Gastrocnemius medialis (tissue), 4 donors: ENCODE measurements at regions of chr7 and their contacts with region 1.

Region 1: DNA sequence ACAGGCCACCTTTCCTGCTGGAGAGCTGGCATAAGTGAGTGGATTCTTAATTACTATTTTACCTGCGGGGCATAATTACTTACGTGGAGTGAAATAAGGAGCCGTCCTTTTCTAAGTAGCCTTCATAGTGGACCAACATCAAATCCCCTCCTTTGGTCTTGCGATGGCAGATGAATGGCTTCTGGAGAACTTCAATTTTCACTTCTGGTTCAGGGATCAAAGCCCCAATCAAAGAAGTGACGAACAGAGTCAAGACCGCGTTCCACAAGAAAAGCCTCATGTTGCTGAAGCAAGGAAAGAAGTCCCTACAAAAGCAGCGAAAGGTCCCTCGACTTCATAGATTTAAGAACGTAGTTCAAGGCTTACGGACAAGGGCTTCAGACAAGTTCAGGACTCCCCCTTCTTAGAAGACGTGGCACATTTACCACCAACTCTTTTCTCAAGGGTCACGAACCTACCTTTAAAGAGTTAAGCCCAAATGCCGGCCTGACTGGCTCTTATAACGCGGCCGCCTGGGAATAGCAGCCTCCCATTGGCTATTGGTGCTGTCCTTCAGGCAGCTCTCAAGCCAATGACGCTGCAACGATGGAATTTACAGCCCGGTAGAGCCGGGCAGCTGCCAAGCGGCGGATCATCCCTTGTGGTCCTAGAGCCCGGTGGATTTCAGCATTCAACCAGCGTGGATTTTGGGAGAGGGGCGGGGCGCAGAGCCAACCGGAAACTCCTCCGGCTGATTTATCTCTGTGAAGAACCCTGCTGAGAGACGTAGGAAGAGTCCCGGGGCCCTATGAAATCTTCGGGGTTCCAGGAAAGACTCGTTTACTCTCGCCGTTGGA is at the start of gene FKBP14:
- DNase-seq: peak; percentile 98
- ATAC-seq: peak; percentile 90 to 94
- H3K4me3 ChIP-seq: peak within 1 kb of the TSS; percentile 73 to 94 (median 89)
- H3K27ac ChIP-seq: peak within 1 kb of the TSS; percentile 80 to 94 (median 93)
- H3K4me1 ChIP-seq: peaks cover 31 to 36% of the 10 kb centered on the region in 2 donors
- H3K27me3 ChIP-seq: no peaks in the 10 kb centered on the region
- CTCF ChIP-seq: no peak
- POLR2A ChIP-seq: peak in 1 of 2 donors; percentile 48
- total RNA-seq, gene FKBP14: 1.4 to 2.4 (median 1.5) TPM

Region 2: GRCh38 chr7:29806208-29806994 is 220.0 kb before region 1 on chr7 and contains the start of gene WIPF3:
- in situ Hi-C with region 1: no loop called
- intact Hi-C with region 1: loop called (anchors 2 kb)
- DNase-seq: peak in 1 of 2 donors; percentile 56
- ATAC-seq: peak; percentile 55 to 59
- H3K4me3 ChIP-seq: peak within 1 kb of the TSS; percentile 59 to 82 (median 72)
- H3K27ac ChIP-seq: peak within 1 kb of the TSS; percentile 84 to 96 (median 94)
- H3K4me1 ChIP-seq: peaks cover 33 to 35% of the 10 kb centered on the region in 2 donors
- H3K27me3 ChIP-seq: no peaks in the 10 kb centered on the region
- CTCF ChIP-seq: peak in 2 of 5 experiments; percentile 19 to 29
- POLR2A ChIP-seq: peak; percentile 73 to 80
- total RNA-seq, gene WIPF3: 4.2 to 9.9 (median 8.3) TPM

Region 3: DNA sequence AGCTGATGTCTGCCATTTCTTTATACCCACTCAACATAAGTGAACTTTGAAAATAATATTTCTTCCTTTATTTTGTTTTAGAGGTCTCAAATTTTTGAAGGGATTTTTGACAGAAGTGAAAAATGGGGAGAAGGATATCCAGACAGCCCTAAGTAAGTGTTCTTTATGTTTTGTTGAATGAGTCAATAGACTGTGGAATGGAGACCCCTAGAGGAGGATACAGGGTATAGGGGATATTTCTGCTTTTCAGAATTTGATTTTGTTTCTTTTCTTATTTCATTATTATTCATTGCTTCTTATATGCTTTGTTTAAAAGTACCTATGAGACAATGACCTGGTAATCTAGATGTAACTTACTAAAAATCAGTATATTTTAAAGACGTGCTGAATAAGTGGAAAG is 36.1 kb after region 1 on chr7:
- in situ Hi-C with region 1: no loop called
- intact Hi-C with region 1: loop called (anchors 5 kb)
- DNase-seq: no peak
- ATAC-seq: peak in 1 of 2 donors; percentile 66
- H3K4me3 ChIP-seq: no peak overlapping the region
- H3K27ac ChIP-seq: no peak overlapping the region
- H3K4me1 ChIP-seq: no peaks in the 10 kb centered on the region
- H3K27me3 ChIP-seq: no peaks in the 10 kb centered on the region
- CTCF ChIP-seq: peak in 2 of 5 experiments; percentile 28 to 49
- POLR2A ChIP-seq: no peak

Region 4: GRCh38 chr7:30284298-30285066 is 258.0 kb after region 1 on chr7 and contains the start of gene ZNRF2:
- in situ Hi-C with region 1: no loop called
- intact Hi-C with region 1: loop called (anchors 2 kb)
- DNase-seq: peak; percentile 100
- ATAC-seq: peak; percentile 76 to 79
- H3K4me3 ChIP-seq: peak within 1 kb of the TSS; percentile 77 to 98 (median 81)
- H3K27ac ChIP-seq: peak within 1 kb of the TSS; percentile 91 to 99 (median 96)
- H3K4me1 ChIP-seq: peaks cover 32 to 39% of the 10 kb centered on the region in 2 donors
- H3K27me3 ChIP-seq: no peaks in the 10 kb centered on the region
- CTCF ChIP-seq: peak; percentile 39 to 53 (median 50)
- POLR2A ChIP-seq: peak; percentile 89 to 93
- total RNA-seq, gene ZNRF2: 9.6 to 19.3 (median 17.4) TPM

Region 5: GRCh38 chr7:30594549-30595435 is 568.3 kb after region 1 on chr7 and contains the start of gene GARS1:
- in situ Hi-C with region 1: no loop called
- intact Hi-C with region 1: loop called (anchors 5 kb)
- DNase-seq: peak; percentile 76 to 84
- ATAC-seq: peak; percentile 94
- H3K4me3 ChIP-seq: peak within 1 kb of the TSS; percentile 93 to 99 (median 98)
- H3K27ac ChIP-seq: peak within 1 kb of the TSS; percentile 98 to 99 (median 98)
- H3K4me1 ChIP-seq: peaks cover 26 to 27% of the 10 kb centered on the region in 2 donors
- H3K27me3 ChIP-seq: no peaks in the 10 kb centered on the region
- CTCF ChIP-seq: peak in 1 of 5 experiments; percentile 19
- POLR2A ChIP-seq: peak; percentile 92 to 93
- total RNA-seq, gene GARS1: 52.1 to 67.7 (median 60.1) TPM